ENCODE measurements at regions of chr13 and their contacts with region 1.

Region 1: GRCh38 chr13:72808917-72809500 is 27.1 kb downstream of the PIBF1 start:
- DNase-seq: peak in 1 of 3 donors; percentile 7
- H3K4me3 ChIP-seq: no peak overlapping the region
- H3K4me3 Mint-ChIP-seq: no peak overlapping the region
- H3K27ac ChIP-seq: no peak overlapping the region
- H3K27ac Mint-ChIP-seq: no peak overlapping the region
- H3K4me1 ChIP-seq: peaks cover 13 to 24% of the 10 kb centered on the region in 2 donors
- H3K4me1 Mint-ChIP-seq: peaks cover 18% of the 10 kb centered on the region
- H3K27me3 ChIP-seq: no peaks in the 10 kb centered on the region
- H3K27me3 Mint-ChIP-seq: no peaks in the 10 kb centered on the region
- CTCF ChIP-seq: peak; percentile 87

Region 2: GRCh38 chr13:72700509-72700908 is 108.5 kb before region 1 on chr13:
- intact Hi-C with region 1: no loop called
- DNase-seq: no peak
- H3K4me3 ChIP-seq: no peak overlapping the region
- H3K4me3 Mint-ChIP-seq: no peak overlapping the region
- H3K27ac ChIP-seq: no peak overlapping the region
- H3K27ac Mint-ChIP-seq: peak overlapping the region in 2 of 7 donors; percentile 35 to 50
- H3K4me1 ChIP-seq: peaks cover 0 to 4% of the 10 kb centered on the region in 2 donors
- H3K4me1 Mint-ChIP-seq: peaks cover 11% of the 10 kb centered on the region
- H3K27me3 ChIP-seq: no peaks in the 10 kb centered on the region
- H3K27me3 Mint-ChIP-seq: peaks cover 0 to 2% (median 0%) of the 10 kb centered on the region in 3 donors
- CTCF ChIP-seq: no peak

Region 3: DNA sequence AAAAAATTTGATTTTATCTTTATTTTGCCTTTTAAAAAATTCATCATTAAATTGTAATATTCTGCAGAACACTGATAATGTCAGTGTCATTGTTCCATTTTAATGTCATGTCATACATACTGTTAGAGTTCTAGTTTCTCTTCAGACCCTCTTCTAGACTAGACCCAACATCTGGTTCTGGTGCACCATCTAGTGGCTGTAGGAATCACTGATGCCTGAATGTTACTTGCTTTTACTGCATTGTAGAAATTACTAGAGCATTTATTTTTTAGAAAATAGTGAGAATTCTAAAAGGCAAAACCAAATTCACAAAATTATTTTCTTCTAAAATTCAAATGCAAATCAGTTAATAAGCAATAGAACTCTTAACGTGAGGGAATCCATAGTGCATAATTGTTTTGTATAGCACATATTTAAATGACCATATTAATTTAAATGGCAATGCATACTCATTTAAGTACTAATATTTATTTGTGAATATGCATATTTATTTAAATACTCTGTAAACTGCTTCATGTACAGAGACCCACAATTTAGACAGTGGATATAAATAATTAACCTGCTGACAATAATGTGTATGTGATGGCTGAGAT is 899.5 kb after region 1 on chr13:
- intact Hi-C with region 1: loop called in 1 of 2 experiments (anchors 10 kb)
- DNase-seq: peak; percentile 9 to 34 (median 24)
- H3K4me3 ChIP-seq: no peak overlapping the region
- H3K4me3 Mint-ChIP-seq: no peak overlapping the region
- H3K27ac ChIP-seq: no peak overlapping the region
- H3K27ac Mint-ChIP-seq: no peak overlapping the region
- H3K4me1 ChIP-seq: no peaks in the 10 kb centered on the region
- H3K4me1 Mint-ChIP-seq: no peaks in the 10 kb centered on the region
- H3K27me3 ChIP-seq: no peaks in the 10 kb centered on the region
- H3K27me3 Mint-ChIP-seq: peaks cover 0 to 4% (median 0%) of the 10 kb centered on the region in 3 donors
- CTCF ChIP-seq: peak; percentile 68